ENCODE measurements at regions of chr1 and their contacts with region 1.

Region 1: DNA sequence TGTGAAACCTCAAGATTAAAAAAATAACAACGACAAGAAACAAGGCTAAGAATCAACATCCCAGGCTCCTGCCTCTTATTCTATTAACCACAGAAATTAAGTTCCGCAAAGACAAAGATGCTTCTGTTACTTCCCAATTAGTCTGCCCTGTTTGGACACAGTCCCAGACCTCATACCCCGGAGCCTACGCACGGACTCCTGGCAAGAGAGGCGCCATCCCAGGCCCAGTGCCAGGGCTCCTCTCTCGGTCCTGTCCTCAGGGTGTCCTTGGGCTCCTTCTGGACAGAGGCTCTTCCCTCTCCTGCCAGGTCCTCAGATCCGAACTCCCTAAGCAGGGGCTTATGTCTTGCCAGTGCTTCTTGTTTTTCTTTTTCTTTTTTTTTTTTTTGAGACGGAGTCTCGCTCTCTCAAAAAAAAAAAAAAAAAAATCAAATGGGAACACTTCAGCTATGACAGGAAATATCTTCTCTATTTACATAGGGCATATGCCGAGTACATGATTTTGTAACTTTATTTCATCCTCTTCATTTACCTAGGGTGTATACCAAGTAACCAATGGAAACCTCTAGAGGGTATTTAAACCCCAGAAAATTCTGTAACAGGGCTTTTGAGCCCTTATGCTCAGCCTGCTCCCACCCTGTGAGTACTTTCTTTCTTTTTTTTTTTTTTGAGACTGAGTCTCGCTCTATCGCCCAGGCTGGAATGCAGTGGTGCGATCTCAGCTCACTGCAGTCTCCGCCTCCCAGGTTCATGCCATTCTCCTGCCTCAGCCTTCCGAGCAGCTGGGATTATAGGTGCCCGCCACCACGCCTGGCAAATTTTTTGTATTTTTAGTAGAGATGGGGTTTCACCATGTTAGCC is 11.7 kb upstream of the ENO1 start:
- DNase-seq: peak; percentile 73 to 75
- H3K4me3 ChIP-seq: peak overlapping the region; percentile 50; the same call in 1 of the 2 replicates
- H3K27ac ChIP-seq: peak overlapping the region; percentile 80
- H3K4me1 ChIP-seq: peaks cover 18% of the 10 kb centered on the region
- H3K27me3 ChIP-seq: no peaks in the 10 kb centered on the region
- CTCF ChIP-seq: no peak

Region 2: DNA sequence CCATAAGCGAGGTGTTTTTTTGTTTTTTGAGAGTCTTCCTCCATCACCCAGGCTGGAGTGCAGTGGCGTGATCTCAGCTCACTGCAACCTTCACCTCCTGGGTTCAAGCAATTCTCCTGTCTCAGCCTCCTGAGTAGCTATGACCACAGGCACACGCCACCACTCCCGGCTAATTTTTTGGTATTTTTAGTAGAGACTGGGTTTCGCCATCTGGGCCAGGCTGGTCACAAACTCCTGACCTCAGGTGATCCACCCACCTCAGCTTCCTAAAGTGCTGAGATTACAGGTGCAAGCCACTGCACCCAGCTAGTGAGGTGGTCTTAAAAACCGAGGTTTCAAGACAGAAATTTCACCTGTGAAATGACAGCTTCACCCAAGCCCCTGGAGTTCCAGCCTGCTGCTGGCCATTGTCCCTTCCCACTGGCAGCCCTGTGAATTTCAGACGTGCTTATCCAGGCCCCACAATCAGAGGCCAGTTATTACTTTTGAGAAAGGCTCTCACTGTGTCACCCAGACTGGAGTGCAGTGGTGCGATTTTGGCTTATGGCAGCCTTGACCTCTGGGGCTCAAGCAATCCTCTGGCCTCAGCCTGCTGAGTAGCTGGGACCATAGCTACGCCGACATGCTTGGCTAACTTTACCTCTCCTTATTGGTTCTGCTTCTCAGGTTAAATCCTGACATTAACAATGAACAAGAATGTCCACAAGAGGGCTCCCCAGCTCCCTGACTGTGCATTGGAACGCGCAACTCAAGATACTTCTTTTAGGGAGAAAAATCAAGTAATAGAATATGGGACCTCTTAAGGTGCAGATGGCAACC is 31.1 kb before region 1 on chr1:
- CTCF ChIA-PET with region 1: no interaction called
- POLR2A ChIA-PET with region 1: no interaction called
- intact Hi-C with region 1: no loop called
- DNase-seq: peak; percentile 31 to 48
- H3K4me3 ChIP-seq: no peak overlapping the region
- H3K27ac ChIP-seq: 0 out of 2 replicates have a peak overlapping the region, but pooled peaks have one; percentile 2
- H3K4me1 ChIP-seq: 0 out of 2 replicates have a peak, but pooled peaks cover 5% of the 10 kb centered on the region
- H3K27me3 ChIP-seq: no peaks in the 10 kb centered on the region
- CTCF ChIP-seq: peak; percentile 69

Region 3: DNA sequence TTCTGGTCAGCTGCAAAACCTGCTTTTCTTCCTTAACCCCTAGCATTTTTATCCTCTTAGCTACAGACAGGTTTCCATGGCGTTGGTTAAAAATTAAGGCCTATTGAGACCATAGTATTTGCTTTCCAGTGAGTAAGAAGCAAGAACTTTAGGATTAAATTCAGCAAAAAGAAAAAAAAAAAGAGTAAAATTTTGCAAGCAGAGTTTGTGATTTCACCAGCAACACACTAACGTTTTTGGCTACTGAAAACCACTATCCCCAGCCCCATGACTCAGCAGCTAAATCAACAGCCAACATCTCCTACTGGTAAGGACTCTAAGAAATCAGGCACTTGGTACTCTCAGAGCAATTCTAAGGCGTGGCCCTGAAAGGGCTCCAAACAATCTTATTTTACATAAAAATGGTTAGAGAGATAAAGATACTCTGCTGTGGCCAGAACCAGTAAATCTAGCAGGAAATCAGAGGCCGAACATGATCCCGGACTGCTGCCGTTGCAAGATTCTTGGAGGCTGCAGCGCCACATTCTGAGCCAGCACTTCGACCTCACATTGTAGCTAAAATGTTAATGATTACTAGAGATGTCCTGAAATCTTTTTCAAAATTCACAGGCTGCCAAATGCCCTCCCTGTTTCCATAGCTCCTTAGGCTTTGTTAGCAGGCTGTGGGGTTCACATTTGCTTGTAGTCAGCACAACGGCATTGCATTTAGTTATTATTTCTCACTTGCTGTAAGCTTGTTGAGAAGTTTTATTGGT is 10.1 kb before region 1 on chr1:
- CTCF ChIA-PET with region 1: interaction called, 19 read pairs
- POLR2A ChIA-PET with region 1: no interaction called
- intact Hi-C with region 1: loop called (anchors 1 kb)
- DNase-seq: peak; percentile 61 to 87
- H3K4me3 ChIP-seq: peak overlapping the region; percentile 91; the same call in 1 of the 2 replicates
- H3K27ac ChIP-seq: peak overlapping the region; percentile 96
- H3K4me1 ChIP-seq: peaks cover 30% of the 10 kb centered on the region
- H3K27me3 ChIP-seq: no peaks in the 10 kb centered on the region
- CTCF ChIP-seq: no peak

Region 4: DNA sequence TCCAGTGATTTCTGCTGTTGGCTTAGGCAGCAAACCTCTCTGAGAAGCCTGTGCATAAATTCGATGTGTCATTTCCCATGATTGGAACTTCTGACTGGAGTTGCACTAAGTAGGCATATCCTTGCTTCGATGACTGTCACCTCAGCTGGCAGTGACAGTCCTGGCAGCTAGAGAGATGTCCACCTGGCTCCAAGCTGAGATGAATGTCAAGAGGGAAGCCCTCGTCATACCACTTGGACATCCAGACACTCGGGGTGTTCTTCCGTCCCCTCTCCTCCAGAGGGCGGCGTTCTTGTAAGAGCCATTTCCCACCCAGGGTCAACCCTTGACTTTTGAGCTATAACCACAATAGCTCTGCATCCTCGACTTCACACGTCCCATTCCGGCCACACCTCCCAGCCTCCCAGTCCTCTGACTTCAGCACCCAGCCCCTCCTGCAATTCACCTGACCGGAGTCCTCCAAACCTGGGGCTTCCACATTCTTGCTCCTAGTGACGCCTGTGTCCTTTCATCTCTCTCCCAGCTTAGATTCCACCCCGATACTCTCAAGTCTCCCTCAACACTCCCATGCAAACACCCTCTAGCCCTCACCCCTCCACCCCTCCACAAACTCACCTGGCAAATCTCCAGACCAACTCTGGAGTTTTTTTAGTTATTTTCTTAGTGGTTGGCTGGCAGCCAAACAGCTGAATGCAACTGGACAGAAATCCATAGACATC is 72.8 kb after region 1 on chr1:
- CTCF ChIA-PET with region 1: no interaction called
- POLR2A ChIA-PET with region 1: no interaction called
- intact Hi-C with region 1: no loop called
- DNase-seq: peak; percentile 62 to 63
- H3K4me3 ChIP-seq: no peak overlapping the region
- H3K27ac ChIP-seq: no peak overlapping the region
- H3K4me1 ChIP-seq: no peaks in the 10 kb centered on the region
- H3K27me3 ChIP-seq: no peaks in the 10 kb centered on the region
- CTCF ChIP-seq: peak; percentile 56